ENCODE measurements at regions of chr6 and their contacts with region 1.

Region 1: GRCh38 chr6:51949468-51949867 is 137.9 kb downstream of the PKHD1 start:
- DNase-seq: no peak
- H3K4me3 ChIP-seq: no peak overlapping the region
- H3K27ac ChIP-seq: no peak overlapping the region
- H3K4me1 ChIP-seq: no peaks in the 10 kb centered on the region
- H3K27me3 ChIP-seq: peaks cover 33% of the 10 kb centered on the region
- CTCF ChIP-seq: no peak

Region 2: DNA sequence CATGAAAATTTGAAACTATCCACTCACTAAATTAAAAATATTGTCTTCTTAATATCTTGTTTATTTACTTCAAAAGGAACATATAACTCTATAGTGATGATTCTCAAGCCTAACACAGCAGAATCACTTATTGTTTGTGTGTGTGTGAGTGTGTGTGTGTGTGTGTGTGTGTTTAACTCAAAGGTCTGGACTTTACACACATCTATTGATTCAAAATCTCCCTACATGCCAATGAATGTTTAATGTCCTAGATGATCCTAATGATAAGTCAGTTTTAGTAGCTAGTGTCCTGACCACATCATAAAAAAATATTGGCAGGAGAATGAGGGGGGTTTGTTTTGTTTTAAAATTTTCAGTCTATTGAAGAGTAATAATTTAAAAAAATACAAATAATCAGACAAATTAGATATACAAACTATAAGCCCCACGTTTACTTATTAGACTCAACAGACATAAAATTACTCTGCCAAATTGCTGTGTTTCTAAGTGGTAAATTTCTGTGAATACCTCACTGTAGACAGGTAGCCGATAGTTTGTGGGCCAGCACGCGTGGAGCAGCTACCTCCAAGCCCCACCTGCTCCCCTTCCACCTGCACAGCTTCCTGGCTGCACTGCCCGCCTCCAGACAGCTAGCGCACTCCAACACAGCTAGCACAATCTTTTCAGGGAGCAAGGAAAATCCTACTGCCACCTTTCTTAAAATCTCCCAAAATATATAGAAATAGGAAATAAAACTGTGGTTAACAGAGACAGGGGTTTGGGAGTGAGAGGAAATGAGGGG is 211.7 kb before region 1 on chr6:
- CTCF ChIA-PET with region 1: no interaction called
- POLR2A ChIA-PET with region 1: no interaction called
- intact Hi-C with region 1: loop called (anchors 10 kb)
- DNase-seq: no peak
- H3K4me3 ChIP-seq: no peak overlapping the region
- H3K27ac ChIP-seq: no peak overlapping the region
- H3K4me1 ChIP-seq: no peaks in the 10 kb centered on the region
- H3K27me3 ChIP-seq: peaks cover 19% of the 10 kb centered on the region
- CTCF ChIP-seq: no peak

Measured in A673 (cell line).